ENCODE measurements at regions of chr1 and their contacts with region 1.

Region 1: DNA sequence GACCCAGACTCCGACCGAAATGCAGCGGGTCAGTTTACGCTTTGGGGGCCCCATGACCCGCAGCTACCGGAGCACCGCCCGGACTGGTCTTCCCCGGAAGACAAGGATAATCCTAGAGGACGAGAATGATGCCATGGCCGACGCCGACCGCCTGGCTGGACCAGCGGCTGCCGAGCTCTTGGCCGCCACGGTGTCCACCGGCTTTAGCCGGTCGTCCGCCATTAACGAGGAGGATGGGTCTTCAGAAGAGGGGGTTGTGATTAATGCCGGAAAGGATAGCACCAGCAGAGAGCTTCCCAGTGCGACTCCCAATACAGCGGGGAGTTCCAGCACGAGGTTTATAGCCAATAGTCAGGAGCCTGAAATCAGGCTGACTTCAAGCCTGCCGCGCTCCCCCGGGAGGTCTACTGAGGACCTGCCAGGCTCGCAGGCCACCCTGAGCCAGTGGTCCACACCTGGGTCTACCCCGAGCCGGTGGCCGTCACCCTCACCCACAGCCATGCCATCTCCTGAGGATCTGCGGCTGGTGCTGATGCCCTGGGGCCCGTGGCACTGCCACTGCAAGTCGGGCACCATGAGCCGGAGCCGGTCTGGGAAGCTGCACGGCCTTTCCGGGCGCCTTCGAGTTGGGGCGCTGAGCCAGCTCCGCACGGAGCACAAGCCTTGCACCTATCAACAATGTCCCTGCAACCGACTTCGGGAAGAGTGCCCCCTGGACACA is 534 bp downstream of the C1orf56 start:
- DNase-seq: peak; percentile 69
- H3K4me3 ChIP-seq: peak overlapping the region; percentile 72
- H3K4me3 Mint-ChIP-seq: peak overlapping the region; percentile 81
- H3K27ac Mint-ChIP-seq: peak overlapping the region; percentile 74
- H3K4me1 ChIP-seq: peaks cover 4% of the 10 kb centered on the region
- H3K4me1 Mint-ChIP-seq: no peaks in the 10 kb centered on the region
- H3K27me3 ChIP-seq: no peaks in the 10 kb centered on the region
- H3K27me3 Mint-ChIP-seq: no peaks in the 10 kb centered on the region
- CTCF ChIP-seq: peak in 1 of 2 experiments; percentile 55

Region 2: DNA sequence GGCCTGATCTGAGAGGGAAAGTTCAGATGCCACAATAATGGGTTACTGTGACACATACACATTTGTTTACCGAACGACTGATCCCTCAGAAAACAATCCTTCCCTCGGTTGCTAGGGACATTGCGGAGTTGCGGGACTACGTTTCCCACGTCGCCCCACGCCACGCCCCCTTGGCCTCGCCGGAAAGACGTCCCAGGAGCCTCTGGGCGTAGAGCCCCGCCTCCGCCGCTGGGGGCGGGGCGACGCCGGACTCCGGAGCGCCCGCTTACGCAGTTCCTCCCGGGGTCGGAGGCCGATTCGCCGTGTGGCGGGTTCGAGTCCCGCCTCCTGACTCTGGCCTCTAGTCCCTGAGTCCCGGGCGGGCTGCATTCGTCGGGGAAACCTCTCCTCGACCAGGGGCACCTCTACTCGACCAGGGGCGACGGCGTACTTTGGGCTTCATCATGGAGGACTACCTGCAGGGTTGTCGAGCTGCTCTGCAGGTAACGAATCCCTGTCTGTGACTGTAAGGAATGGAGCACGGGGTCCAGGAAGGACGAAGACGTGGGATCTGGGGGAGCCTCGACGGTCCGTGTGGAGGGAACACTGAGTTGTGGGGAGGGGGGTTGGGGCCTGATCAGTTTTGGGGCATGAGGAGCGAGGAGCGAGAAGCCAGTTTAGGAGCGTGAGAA is 39.8 kb before region 1 on chr1 and contains the start of gene PRUNE1:
- CTCF ChIA-PET with region 1: interaction called, 15 read pairs
- POLR2A ChIA-PET with region 1: interaction called, 5 read pairs
- intact Hi-C with region 1: loop called (anchors 1 kb)
- DNase-seq: peak; percentile 96 to 97
- H3K4me3 ChIP-seq: peak within 1 kb of the TSS; percentile 71
- H3K4me3 Mint-ChIP-seq: peak within 1 kb of the TSS; percentile 92
- H3K27ac Mint-ChIP-seq: peak within 1 kb of the TSS; percentile 99
- H3K4me1 ChIP-seq: peaks cover 46% of the 10 kb centered on the region
- H3K4me1 Mint-ChIP-seq: peaks cover 21% of the 10 kb centered on the region
- H3K27me3 ChIP-seq: no peaks in the 10 kb centered on the region
- H3K27me3 Mint-ChIP-seq: no peaks in the 10 kb centered on the region
- CTCF ChIP-seq: no peak
- total RNA-seq, gene PRUNE1: 24.2 and 24.3 TPM in 2 replicates

Region 3: GRCh38 chr1:151013518-151013917 is 34.6 kb before region 1 on chr1:
- CTCF ChIA-PET with region 1: interaction called, 7 read pairs
- POLR2A ChIA-PET with region 1: interaction called, 3 read pairs
- intact Hi-C with region 1: loop called (anchors 1 kb)
- DNase-seq: peak; percentile 48 to 56
- H3K4me3 ChIP-seq: no peak overlapping the region
- H3K4me3 Mint-ChIP-seq: peak overlapping the region; percentile 54
- H3K27ac Mint-ChIP-seq: peak overlapping the region; percentile 84
- H3K4me1 ChIP-seq: peaks cover 42% of the 10 kb centered on the region
- H3K4me1 Mint-ChIP-seq: peaks cover 17% of the 10 kb centered on the region
- H3K27me3 ChIP-seq: no peaks in the 10 kb centered on the region
- H3K27me3 Mint-ChIP-seq: no peaks in the 10 kb centered on the region
- CTCF ChIP-seq: peak in 1 of 2 experiments; percentile 8

Measured in Caco-2 (cell line).